Left cardiac atrium (tissue), 4 donors: ENCODE measurements at regions of chr6 and their contacts with region 1.

Region 1: GRCh38 chr6:150079604-150080003 is 10.7 kb upstream of the ULBP3 start:
- DNase-seq: no peak
- ATAC-seq: no peak

Region 2: DNA sequence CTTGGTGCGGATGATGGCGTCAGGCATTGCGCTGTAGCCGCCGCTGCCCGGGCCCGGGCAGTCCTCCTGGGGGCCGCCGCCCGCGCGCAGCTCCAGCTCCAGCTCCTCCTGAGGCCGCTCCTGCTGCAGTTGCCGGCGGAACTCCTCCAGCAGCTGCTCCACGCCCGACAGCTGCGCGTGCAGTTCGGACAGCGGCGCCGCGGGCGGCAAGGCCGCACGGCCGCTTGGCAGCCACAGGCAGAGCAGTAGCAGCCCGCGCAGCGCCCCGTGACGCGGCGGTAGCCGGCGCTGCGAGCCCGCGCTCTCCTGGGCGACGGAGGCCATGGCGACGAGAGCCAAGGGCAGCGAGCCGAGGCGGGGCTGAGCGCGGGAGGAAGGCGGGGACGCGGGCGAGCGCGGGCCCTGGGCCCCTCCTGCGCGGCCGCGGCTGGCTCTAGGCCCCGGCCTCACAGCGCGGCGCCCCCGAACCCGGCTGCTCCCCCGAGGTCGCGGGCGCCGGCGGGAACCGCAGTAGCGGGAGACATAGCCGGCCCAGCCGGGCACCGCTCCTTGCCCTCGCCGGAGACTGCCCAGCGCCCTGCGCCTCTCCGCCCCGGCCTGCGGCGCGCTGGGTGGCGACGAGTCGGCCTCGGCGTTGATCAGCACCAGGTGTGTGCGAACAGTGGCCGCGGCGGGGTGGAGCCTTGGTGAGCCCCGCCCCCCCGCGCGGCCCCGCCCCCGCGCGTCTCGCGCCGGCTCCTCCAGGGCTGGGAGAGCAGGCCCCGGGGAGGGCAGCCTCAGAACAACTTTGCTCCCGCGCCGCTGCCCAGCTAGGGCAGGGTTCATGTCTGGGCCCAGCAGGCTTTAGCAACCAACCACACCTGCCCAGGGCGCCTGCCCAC is 215.7 kb before region 1 on chr6 and contains the start of gene LRP11:
- intact Hi-C with region 1: no loop called
- DNase-seq: peak; percentile 83
- ATAC-seq: peak; percentile 92 to 95
- total RNA-seq, gene LRP11: 15.5 to 25.7 TPM

Region 3: GRCh38 chr6:150334790-150335783 is 255.5 kb after region 1 on chr6:
- intact Hi-C with region 1: loop called (anchors 1 to 2 kb)
- DNase-seq: peak; percentile 28
- ATAC-seq: peak in 1 of 2 donors; percentile 50

Region 4: DNA sequence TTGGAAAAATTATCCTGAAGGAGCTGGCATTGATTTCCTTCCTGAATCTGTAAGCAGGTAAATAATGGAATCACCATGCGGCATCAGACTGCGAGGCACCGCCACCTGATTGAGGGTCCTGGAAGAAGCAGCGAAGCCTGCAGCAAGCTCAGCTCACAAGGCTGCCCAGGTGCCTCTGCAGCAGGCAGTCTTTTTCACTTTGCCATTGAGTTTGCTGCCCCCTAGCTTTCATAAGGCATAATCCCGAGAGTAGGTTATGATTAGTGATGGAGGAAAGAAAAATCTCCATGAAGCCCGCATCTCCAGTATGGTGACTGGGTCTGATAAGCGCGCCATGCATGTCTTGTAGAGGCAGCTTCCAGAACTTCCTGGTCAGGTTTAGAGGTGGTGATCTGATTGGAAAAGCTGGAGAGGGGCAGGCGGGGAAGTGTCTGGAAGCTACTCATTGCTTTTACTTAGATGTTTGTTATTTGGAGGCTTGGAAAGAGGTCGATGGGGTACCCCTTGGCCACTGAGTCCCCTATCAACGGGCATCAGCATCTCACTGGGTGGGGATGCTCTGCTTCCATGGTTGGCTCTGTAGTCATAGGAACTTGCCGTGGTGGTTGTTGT is 315.9 kb after region 1 on chr6:
- intact Hi-C with region 1: loop called in 1 of 2 experiments (anchors 2 kb)
- DNase-seq: peak; percentile 35
- ATAC-seq: peak; percentile 44 to 83

Region 5: DNA sequence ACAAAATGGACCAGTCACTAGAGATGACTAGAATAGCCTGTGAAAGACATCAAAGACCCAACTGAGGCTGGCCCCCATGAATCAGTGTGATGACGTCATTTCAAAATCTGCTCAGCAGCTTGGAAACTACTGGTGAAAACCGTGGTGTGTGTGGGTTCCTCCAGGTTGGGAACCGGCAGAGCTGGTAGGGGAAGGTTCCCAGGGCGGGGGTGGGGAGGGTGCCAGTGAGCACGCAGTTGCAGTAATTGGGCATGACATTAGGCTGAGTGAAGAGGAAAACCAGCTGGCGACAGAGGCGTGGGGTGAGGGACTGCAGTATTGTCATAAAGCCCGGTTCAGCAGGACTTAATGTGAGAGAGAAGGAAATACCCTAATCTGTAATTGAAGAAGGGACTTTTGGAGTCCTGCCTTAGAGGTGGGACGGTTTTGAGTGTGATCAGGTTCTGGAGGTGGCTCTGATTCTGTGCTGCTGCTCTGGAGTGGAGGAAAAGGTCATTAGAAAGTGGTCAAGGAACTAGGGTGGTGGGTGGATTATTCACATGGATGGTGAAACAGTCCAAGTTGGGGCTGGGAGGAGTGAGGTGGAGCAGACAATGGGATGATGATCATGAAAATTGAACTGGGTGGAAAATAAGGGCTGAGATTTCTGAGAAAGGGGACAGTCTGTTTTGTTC is 733.9 kb after region 1 on chr6:
- intact Hi-C with region 1: loop called in 1 of 2 experiments (anchors 10 kb)
- DNase-seq: no peak
- ATAC-seq: peak in 1 of 2 donors; percentile 15